ENCODE measurements at regions of chr3 and their contacts with region 1.

Region 1: DNA sequence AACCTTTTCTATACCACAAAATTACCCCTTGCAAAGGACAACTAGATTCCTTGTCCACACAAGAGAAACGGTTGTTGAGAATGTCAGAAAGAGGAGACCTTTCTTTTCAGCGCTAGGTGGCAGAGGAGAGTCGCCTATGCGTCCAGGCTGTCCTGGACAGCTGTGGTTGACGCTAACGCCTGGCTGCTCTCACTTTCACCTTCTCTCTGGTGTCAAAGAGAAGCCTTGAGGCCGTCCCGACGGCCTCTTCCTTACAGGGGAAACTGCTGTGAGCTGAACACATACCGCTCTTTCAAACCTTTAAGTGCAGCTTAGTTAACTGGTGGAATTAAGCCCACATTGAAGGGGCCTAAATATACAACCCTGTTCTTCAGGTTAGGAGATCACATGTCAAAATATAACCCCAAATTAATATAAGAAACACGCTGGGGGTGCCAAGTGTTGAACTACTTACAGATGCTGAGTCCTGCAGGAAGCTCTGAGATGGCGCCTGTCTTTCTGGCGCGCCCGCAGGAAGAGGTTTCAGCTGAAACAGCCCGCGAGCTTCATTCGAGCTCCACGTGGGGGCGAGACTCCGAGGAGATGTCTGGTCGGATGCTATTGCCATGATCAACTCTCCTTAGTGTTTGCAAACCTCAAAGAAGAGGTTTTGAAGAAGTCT is 26.1 kb upstream of the KBTBD8 start:
- DNase-seq: peak; percentile 70
- H3K4me3 Mint-ChIP-seq: no peak overlapping the region
- H3K27ac Mint-ChIP-seq: no peak overlapping the region
- H3K4me1 Mint-ChIP-seq: no peaks in the 10 kb centered on the region
- H3K27me3 Mint-ChIP-seq: peaks cover 43% of the 10 kb centered on the region
- CTCF ChIP-seq: peak; percentile 76

Region 2: GRCh38 chr3:66938338-66938963 is 33.6 kb before region 1 on chr3:
- CTCF ChIA-PET with region 1: interaction called, 35 read pairs
- POLR2A ChIA-PET with region 1: no interaction called
- intact Hi-C with region 1: no loop called
- DNase-seq: peak; percentile 69
- H3K4me3 Mint-ChIP-seq: no peak overlapping the region
- H3K27ac Mint-ChIP-seq: no peak overlapping the region
- H3K4me1 Mint-ChIP-seq: no peaks in the 10 kb centered on the region
- H3K27me3 Mint-ChIP-seq: peaks cover 94% of the 10 kb centered on the region
- CTCF ChIP-seq: peak; percentile 70

Region 3: GRCh38 chr3:66983101-66983500 is 11.1 kb after region 1 on chr3:
- CTCF ChIA-PET with region 1: interaction called, 45 read pairs
- POLR2A ChIA-PET with region 1: no interaction called
- intact Hi-C with region 1: no loop called
- DNase-seq: no peak
- H3K4me3 Mint-ChIP-seq: no peak overlapping the region
- H3K27ac Mint-ChIP-seq: no peak overlapping the region
- H3K4me1 Mint-ChIP-seq: no peaks in the 10 kb centered on the region
- H3K27me3 Mint-ChIP-seq: peaks cover 12% of the 10 kb centered on the region
- CTCF ChIP-seq: no peak

Region 4: DNA sequence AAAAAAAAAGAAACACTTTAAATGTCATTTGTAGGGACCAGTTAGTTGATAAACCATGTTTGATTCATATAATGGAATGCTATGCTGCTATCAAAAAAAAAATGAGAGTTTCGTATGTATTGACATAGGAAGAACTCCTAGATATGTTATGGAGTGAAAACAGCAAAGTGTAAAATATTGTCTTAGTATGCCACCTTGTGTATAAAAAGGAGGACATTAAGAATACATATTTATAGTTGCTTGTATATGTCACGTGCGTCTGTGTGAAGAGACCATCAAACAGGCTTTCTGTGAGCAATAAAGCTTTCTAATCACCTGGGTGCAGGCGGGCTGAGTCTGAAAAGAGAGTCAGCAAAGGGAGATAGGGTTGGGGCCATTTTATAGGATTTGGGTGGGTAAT is 65.6 kb after region 1 on chr3:
- CTCF ChIA-PET with region 1: interaction called, 74 read pairs
- POLR2A ChIA-PET with region 1: interaction called, 3 read pairs
- intact Hi-C with region 1: loop called (anchors 1 kb)
- DNase-seq: no peak
- H3K4me3 Mint-ChIP-seq: no peak overlapping the region
- H3K27ac Mint-ChIP-seq: no peak overlapping the region
- H3K4me1 Mint-ChIP-seq: no peaks in the 10 kb centered on the region
- H3K27me3 Mint-ChIP-seq: peaks cover 24% of the 10 kb centered on the region
- CTCF ChIP-seq: peak; percentile 11

Region 5: DNA sequence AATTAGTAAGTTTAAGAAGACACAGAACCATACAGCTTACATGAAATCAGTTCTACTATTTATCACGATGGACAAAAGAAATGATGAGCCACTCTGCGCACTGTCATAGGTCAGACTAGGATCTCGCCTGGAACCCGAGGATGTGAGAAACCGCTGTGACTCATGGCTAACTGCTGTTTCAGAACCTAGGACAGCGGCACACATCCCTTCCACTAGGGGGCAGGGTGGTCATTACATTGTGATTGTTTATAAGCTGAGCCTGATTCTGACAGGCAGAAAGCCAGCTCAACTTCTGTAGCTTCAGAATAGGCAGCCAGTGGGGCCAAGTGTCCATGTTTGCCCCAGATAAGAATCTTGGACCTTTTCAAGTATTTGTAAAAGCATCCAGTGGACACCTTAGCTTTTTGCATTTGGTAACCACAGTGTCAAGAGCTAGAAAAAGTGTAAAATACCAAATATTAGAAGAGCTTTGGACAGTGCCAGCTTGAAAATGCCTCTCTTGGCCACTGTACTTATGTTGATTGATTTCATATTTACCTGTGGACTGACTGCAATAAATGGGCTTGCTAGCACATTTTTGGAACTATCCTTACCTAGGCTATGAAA is 141.9 kb after region 1 on chr3:
- CTCF ChIA-PET with region 1: interaction called, 9 read pairs
- POLR2A ChIA-PET with region 1: no interaction called
- intact Hi-C with region 1: loop called (anchors 1 kb)
- DNase-seq: peak; percentile 91
- H3K4me3 Mint-ChIP-seq: no peak overlapping the region
- H3K27ac Mint-ChIP-seq: no peak overlapping the region
- H3K4me1 Mint-ChIP-seq: no peaks in the 10 kb centered on the region
- H3K27me3 Mint-ChIP-seq: peaks cover 13% of the 10 kb centered on the region
- CTCF ChIP-seq: peak; percentile 92